ENCODE measurements at regions of chr2 and their contacts with region 1.

Region 1: GRCh38 chr2:65456064-65456463 is 23.7 kb upstream of the SPRED2 start:
- DNase-seq: peak in 1 of 2 experiments; percentile 65
- H3K4me3 ChIP-seq: no peak overlapping the region
- H3K27ac ChIP-seq: no peak overlapping the region
- H3K4me1 ChIP-seq: peaks cover 69% of the 10 kb centered on the region
- H3K27me3 ChIP-seq: no peaks in the 10 kb centered on the region
- CTCF ChIP-seq: no peak

Region 2: GRCh38 chr2:65142515-65142914 is 313.5 kb before region 1 on chr2:
- CTCF ChIA-PET with region 1: no interaction called
- POLR2A ChIA-PET with region 1: interaction called, 28 read pairs
- intact Hi-C with region 1: no loop called
- DNase-seq: no peak
- H3K4me3 ChIP-seq: no peak overlapping the region
- H3K27ac ChIP-seq: no peak overlapping the region
- H3K4me1 ChIP-seq: no peaks in the 10 kb centered on the region
- H3K27me3 ChIP-seq: no peaks in the 10 kb centered on the region
- CTCF ChIP-seq: peak; percentile 45; the same call in 1 of the 2 replicates

Region 3: DNA sequence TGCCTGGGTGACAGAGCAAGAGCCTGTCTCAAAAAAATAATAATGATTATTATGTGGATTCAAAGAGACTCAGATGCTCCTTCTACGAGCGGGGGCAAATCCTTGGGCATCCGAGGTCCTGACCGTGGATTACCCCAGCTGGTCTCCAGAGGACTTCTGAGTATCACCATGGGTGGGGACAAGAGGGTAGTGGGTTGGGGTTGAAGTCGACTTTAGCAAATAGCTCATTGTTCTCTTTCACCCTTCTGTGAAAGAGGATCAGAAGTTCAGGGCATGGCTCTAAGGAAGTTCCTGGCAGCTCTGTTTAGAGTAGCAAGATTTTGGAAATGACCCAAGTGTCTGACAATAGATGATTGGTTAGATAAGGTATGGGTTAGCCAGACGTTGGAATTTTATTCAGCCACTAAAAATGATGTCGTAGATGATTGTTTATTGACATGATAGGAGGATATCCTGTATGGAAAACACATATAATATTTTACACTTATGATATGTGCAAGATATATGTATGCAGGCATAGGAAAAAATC is 35.4 kb after region 1 on chr2:
- CTCF ChIA-PET with region 1: interaction called, 4 read pairs
- POLR2A ChIA-PET with region 1: interaction called, 3 read pairs
- intact Hi-C with region 1: loop called (anchors 2 kb)
- DNase-seq: peak; percentile 45 to 77
- H3K4me3 ChIP-seq: no peak overlapping the region
- H3K27ac ChIP-seq: no peak overlapping the region
- H3K4me1 ChIP-seq: peaks cover 15% of the 10 kb centered on the region
- H3K27me3 ChIP-seq: no peaks in the 10 kb centered on the region
- CTCF ChIP-seq: no peak

Region 4: DNA sequence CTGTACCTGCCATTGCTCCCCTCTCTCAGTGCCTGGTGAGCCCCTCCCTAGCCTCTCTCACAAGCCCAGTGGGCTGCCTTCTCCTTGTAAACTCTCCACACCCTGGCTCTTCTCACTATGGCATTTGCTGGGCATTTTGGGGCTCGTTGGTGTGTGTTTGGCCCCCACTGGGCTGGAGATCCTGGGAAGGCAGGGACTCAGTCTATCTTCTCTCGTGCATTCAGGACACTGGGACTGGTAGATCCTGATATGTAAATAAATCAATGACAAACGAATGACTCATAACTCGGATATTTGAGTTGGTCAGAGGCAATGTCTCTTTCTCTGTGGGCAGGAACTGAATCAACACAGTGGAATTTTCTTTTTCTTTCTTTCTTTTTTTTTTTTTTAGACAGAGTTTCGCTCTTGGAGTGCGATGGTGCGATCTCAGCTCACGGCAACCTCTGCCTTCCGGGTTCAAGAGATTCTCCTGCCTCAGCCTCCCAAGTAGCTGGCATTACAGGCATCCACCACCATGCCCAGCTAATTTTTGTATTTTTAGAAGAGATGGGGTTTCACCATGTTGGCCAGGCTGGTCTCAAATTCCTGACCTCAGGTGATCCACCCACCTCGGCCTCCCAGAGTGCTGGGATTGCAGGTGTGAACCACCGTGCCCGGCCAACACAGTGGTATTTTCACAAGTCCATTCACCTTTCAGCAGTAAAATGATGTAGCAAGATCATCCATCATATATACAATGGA is 121.0 kb after region 1 on chr2:
- CTCF ChIA-PET with region 1: no interaction called
- POLR2A ChIA-PET with region 1: no interaction called
- intact Hi-C with region 1: no loop called
- DNase-seq: peak; percentile 53 to 98
- H3K4me3 ChIP-seq: peak overlapping the region; percentile 21; the same call in 1 of the 2 replicates
- H3K27ac ChIP-seq: peak overlapping the region; percentile 90
- H3K4me1 ChIP-seq: peaks cover 32% of the 10 kb centered on the region
- H3K27me3 ChIP-seq: no peaks in the 10 kb centered on the region
- CTCF ChIP-seq: no peak